ENCODE measurements at regions of chr4 and their contacts with region 1.

Region 1: GRCh38 chr4:7771541-7772507 is 167.8 kb downstream of the AFAP1 start:
- DNase-seq: no peak
- ATAC-seq: peak; percentile 49
- H3K4me3 ChIP-seq: no peak overlapping the region
- H3K27ac ChIP-seq: peak overlapping the region; percentile 94
- H3K4me1 ChIP-seq: peaks cover 97% of the 10 kb centered on the region
- H3K27me3 ChIP-seq: no peaks in the 10 kb centered on the region
- CTCF ChIP-seq: no peak

Region 2: GRCh38 chr4:7811536-7812191 is 39.8 kb after region 1 on chr4:
- CTCF ChIA-PET with region 1: no interaction called
- POLR2A ChIA-PET with region 1: no interaction called
- in situ Hi-C with region 1: no loop called
- intact Hi-C with region 1: no loop called
- DNase-seq: no peak
- ATAC-seq: no peak
- H3K4me3 ChIP-seq: no peak overlapping the region
- H3K27ac ChIP-seq: peak overlapping the region; percentile 26; the same call in 1 of the 2 replicates
- H3K4me1 ChIP-seq: peaks cover 26% of the 10 kb centered on the region
- H3K27me3 ChIP-seq: no peaks in the 10 kb centered on the region
- CTCF ChIP-seq: no peak

Region 3: DNA sequence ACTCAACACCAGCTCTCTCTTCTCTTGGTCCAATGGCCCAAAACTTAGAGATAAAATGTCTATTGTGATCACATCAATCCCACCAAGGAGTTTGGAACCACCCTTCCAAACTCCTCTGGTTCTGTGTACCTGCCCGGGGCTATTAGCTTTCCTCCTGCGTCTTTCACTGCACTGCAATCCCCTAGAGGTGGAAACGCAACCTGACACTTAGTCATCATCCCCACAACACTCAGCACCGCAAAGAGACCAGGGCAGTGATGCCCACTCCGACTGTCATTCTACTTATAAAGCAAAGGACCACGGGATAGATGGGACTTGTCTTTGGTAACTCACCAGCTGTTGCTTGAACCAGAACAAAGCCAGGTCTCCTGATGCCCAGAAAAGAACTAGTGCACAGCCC is 145.8 kb after region 1 on chr4:
- CTCF ChIA-PET with region 1: interaction called, 17 read pairs
- POLR2A ChIA-PET with region 1: no interaction called
- in situ Hi-C with region 1: no loop called
- intact Hi-C with region 1: no loop called
- DNase-seq: no peak
- ATAC-seq: peak; percentile 62
- H3K4me3 ChIP-seq: peak overlapping the region; percentile 4 to 37; a peak in 3 of 4 replicates
- H3K27ac ChIP-seq: peak overlapping the region; percentile 85
- H3K4me1 ChIP-seq: peaks cover 74% of the 10 kb centered on the region
- H3K27me3 ChIP-seq: no peaks in the 10 kb centered on the region
- CTCF ChIP-seq: no peak